Dorsolateral prefrontal cortex (tissue), 120 donors: ENCODE measurements at regions of chr21 and their contacts with region 1.

Region 1: DNA sequence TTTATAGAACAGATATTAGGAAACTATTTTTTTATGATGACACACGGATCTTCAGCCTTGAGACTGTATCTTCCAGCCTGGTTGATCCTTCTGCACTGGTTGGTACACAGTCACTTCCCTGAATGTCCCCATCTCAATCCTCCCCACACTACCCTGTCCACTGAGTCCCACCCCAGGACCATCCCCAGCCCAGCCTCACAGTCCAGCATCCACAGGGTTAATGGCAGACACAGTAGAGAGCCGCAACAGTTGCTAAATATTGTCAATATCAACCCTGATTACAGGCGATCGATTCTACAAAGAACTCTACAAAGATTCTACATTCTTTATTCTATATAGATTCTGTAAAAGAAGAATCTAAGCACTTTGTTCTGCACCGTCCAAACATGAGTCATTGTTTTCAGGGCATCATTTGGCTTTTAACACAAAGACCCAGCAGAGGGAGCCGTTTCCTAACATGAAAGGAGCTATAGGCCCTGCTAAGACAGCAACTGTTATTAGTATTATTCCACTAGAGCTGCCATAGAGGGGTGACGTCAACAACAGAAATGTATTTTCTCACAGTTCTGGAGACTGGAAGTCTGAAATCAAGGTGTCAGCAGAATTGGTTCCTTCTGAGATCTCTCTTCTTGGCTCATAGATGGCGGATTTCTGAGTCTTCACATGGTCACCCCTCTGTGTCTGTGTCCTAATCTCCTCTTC is 30.1 kb upstream of the IFNAR2 start:
- DNase-seq: peak in 7 of 10 donors; percentile 58 to 93 (median 75)
- H3K4me3 ChIP-seq: peak overlapping the region in 10 of 59 donors; percentile 5 to 42 (median 17)
- H3K27ac ChIP-seq: peak overlapping the region in 56 of 59 donors; percentile 2 to 91 (median 75)
- H3K27me3 ChIP-seq: no peaks in the 10 kb centered on the region
- CTCF ChIP-seq: peak; percentile 62 to 96 (median 86)

Region 2: DNA sequence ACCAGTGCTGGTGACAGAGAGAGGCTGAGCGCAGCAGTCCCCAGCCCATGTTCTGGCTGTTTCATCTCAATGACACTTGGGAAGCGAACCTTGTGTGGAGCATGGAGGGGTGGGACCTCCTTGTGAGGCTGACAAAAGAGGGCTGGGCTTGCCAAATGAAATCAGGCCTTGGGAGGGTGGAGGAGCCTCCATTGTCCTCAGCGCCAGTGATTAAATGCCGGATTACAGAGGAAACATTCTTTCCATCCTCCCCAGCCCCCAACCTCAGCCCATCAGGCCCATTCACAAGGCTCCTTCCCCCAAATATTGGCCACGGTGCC is 364.8 kb before region 1 on chr21:
- intact Hi-C with region 1: loop called (anchors 2 to 5 kb)
- DNase-seq: peak in 2 of 10 donors; percentile 19 to 43
- H3K4me3 ChIP-seq: peak overlapping the region in 16 of 59 donors; percentile 1 to 42 (median 14)
- H3K27ac ChIP-seq: peak overlapping the region in 56 of 59 donors; percentile 1 to 82 (median 66)
- H3K27me3 ChIP-seq: no peaks in the 10 kb centered on the region
- CTCF ChIP-seq: no peak

Region 3: GRCh38 chr21:32994305-32994704 is 205.4 kb before region 1 on chr21:
- intact Hi-C with region 1: loop called in 1 of 2 experiments (anchors 5 kb)
- DNase-seq: no peak
- H3K4me3 ChIP-seq: no peak overlapping the region
- H3K27ac ChIP-seq: peak overlapping the region in 4 of 59 donors; percentile 12 to 38 (median 22)
- H3K27me3 ChIP-seq: peaks cover 0 to 7% (median 0%) of the 10 kb centered on the region in 45 donors
- CTCF ChIP-seq: peak in 52 of 56 donors; percentile 13 to 72 (median 47)

Region 4: DNA sequence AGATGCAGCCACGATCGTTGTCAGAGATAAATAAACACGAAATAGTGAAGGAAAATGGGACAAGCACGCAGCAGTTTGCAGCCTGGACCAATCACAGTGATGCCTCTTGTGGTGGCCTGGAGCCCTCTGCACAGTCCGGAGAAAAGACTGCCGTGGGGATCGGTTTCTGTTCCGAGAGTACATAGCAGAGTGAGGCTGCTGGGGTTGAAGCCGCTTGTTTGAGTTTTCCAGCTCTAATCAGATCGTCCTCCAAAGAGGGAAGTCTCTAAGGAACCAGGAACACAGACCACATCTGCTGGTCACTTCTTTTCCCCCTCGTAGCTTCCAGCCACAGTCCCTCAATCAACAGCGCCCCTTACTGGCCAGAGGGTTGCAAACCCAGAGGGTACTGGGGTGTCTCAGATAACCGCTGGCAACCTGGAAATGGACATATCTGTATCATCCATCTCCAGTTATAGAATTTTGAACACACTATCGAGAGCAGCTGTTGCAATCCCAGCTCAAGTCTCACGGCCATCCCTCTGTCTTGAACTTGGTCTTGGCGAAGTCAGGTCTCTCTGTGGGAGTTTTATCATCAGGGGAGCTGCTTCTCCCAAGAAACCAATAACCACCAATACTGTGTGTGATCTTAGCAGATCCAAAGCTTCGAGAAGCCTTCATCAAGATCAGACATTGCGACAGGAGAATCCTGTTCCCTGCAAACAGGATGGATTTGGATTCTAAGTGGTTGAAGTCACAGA is 72.3 kb before region 1 on chr21:
- intact Hi-C with region 1: loop called in 1 of 2 experiments (anchors 5 kb)
- DNase-seq: peak; percentile 27 to 85 (median 77)
- H3K4me3 ChIP-seq: peak overlapping the region; percentile 12 to 68 (median 48)
- H3K27ac ChIP-seq: peak overlapping the region; percentile 66 to 99 (median 90)
- H3K27me3 ChIP-seq: peaks cover 0 to 21% (median 0%) of the 10 kb centered on the region in 45 donors
- CTCF ChIP-seq: peak; percentile 38 to 97 (median 86)

Region 5: GRCh38 chr21:33238565-33239255 is 39.0 kb after region 1 on chr21:
- intact Hi-C with region 1: no loop called
- DNase-seq: no peak
- H3K4me3 ChIP-seq: no peak overlapping the region
- H3K27ac ChIP-seq: no peak overlapping the region
- H3K27me3 ChIP-seq: no peaks in the 10 kb centered on the region
- CTCF ChIP-seq: no peak

Region 6: GRCh38 chr21:33360881-33361602 is 161.4 kb after region 1 on chr21:
- intact Hi-C with region 1: loop called (anchors 1 to 5 kb)
- DNase-seq: peak in 9 of 10 donors; percentile 52 to 79 (median 73)
- H3K4me3 ChIP-seq: peak overlapping the region in 37 of 59 donors; percentile 1 to 53 (median 31)
- H3K27ac ChIP-seq: peak overlapping the region in 55 of 59 donors; percentile 3 to 77 (median 55)
- H3K27me3 ChIP-seq: no peaks in the 10 kb centered on the region
- CTCF ChIP-seq: peak; percentile 59 to 86 (median 78)

Region 7: DNA sequence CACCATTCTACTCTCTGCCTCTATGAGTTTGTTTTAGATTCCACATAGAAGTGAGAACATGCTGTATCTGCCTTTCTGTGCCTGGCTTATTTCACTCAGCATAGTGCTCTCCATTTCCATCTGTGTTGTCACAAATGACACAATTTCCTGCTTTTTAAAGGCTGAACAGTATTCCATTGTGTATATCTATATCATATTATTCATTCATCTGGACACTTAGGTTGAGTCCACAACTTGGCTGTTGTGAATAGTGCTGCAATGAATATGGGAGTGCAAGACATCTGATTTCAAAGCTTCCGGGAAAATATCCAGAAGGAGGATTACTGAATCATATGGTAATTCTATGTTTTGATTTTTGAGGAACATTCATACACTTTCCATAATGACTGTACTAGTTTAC is 408.9 kb after region 1 on chr21:
- intact Hi-C with region 1: loop called in 1 of 2 experiments (anchors 10 kb)
- DNase-seq: no peak
- H3K4me3 ChIP-seq: no peak overlapping the region
- H3K27ac ChIP-seq: peak overlapping the region in 40 of 59 donors; percentile 2 to 75 (median 44)
- H3K27me3 ChIP-seq: no peaks in the 10 kb centered on the region
- CTCF ChIP-seq: no peak